Activated CD4-positive, alpha-beta T cell treated with anti-CD3 and anti-CD28 coated beads for 36 hours (primary cell): ENCODE measurements at regions of chr17 and their contacts with region 1.

Region 1: GRCh38 chr17:79796763-79797491 is at the start of gene CBX8:
- DNase-seq: peak; percentile 100
- ATAC-seq: peak; percentile 88
- H3K4me3 Mint-ChIP-seq: peak within 1 kb of the TSS; percentile 79
- H3K27ac Mint-ChIP-seq: peak within 1 kb of the TSS; percentile 55
- H3K4me1 Mint-ChIP-seq: peaks cover 33% of the 10 kb centered on the region
- H3K27me3 Mint-ChIP-seq: peaks cover 35% of the 10 kb centered on the region
- total RNA-seq, gene CBX8: 4.7 to 6.0 TPM

Region 2: DNA sequence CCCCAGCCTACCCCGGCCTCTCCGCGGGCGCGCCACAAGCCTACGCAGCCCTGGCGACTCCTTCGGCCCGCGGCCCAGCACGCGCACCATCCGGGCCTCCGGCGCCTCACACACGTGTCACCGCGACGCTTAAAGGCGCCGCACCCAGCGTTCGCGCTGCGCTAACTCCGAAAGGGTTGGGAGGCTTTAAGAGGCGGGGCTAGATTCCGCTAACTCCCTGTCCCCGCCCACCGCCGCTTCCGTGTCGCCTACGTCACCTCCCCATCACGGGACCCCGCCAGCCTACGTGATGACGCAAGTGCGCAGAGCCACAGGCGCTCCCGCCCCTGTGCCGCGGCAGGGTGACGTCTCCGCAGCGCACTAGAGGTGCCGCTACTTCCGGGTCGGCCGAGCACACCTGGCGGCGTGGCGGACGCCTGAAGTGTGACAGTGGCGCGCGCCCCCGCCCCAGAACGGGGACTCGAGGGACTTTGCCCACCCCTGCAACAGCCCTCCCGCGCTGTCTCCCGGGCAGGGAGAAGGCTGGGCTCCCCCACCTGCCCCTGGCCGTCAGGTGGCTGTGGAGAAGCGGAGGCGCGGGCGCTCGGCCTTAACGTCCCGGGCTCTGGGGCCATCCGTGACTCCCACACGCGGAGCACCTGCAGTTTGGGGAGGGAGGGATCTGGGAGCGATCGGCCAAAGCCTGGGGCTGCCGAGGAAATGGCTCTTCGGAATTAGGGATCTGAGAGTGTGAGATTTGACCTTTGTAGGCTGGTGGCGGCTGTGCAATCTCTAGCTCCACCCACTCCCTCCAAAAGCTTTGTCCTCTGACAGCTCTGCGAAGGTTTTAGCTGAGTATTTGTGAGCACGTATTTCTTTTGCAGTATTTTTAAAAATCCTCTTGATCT is 956.0 kb before region 1 on chr17 and contains the start of gene USP36:
- CTCF ChIA-PET with region 1: no interaction called
- POLR2A ChIA-PET with region 1: no interaction called
- intact Hi-C with region 1: loop called in 1 of 2 experiments (anchors 1 kb)
- DNase-seq: peak; percentile 100
- ATAC-seq: peak; percentile 89
- H3K4me3 Mint-ChIP-seq: peak within 1 kb of the TSS; percentile 86
- H3K27ac Mint-ChIP-seq: peak within 1 kb of the TSS; percentile 96
- H3K4me1 Mint-ChIP-seq: peaks cover 44% of the 10 kb centered on the region
- H3K27me3 Mint-ChIP-seq: no peaks in the 10 kb centered on the region
- total RNA-seq, gene USP36: 90.1 to 92.5 TPM

Region 3: DNA sequence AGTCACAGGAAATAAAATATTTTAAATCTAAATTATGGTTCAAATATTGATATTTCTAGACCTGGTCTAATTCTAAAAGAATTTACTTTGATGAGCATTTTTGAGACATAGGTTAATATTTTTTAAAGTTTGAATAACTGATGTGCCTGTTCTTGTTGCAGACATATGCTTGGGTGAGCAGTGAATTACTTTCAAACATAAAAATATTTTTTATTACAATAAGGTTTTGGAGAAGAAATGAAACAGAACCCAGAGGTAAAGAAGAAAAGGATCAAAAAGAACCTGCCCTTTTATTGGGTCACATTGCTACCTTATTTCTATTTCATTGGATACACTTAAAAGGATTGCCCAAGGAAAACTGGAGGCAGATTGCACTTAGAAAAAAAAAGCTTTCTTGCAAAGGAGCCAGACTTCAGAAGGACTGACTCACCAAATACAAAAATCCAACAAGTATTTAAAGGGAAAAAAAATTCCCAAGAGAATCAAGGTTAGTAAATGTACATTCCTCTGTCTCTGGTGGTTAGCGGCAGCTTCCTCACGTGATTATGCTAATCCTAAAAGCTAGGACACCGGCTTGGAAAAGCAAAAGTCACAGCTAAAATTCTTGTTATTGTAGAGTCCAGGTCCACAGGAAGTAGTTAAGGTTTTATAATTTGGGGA is 47.6 kb before region 1 on chr17:
- CTCF ChIA-PET with region 1: interaction called, 4 read pairs
- POLR2A ChIA-PET with region 1: no interaction called
- intact Hi-C with region 1: loop called in 1 of 2 experiments (anchors 2 kb)
- DNase-seq: no peak
- ATAC-seq: no peak
- H3K4me3 Mint-ChIP-seq: no peak overlapping the region
- H3K27ac Mint-ChIP-seq: no peak overlapping the region
- H3K4me1 Mint-ChIP-seq: peaks cover 25% of the 10 kb centered on the region
- H3K27me3 Mint-ChIP-seq: peaks cover 39% of the 10 kb centered on the region

Region 4: GRCh38 chr17:79769596-79770520 is 27.1 kb before region 1 on chr17:
- CTCF ChIA-PET with region 1: no interaction called
- POLR2A ChIA-PET with region 1: no interaction called
- intact Hi-C with region 1: no loop called
- DNase-seq: no peak
- ATAC-seq: no peak
- H3K4me3 Mint-ChIP-seq: no peak overlapping the region
- H3K27ac Mint-ChIP-seq: no peak overlapping the region
- H3K4me1 Mint-ChIP-seq: no peaks in the 10 kb centered on the region
- H3K27me3 Mint-ChIP-seq: peaks cover 23% of the 10 kb centered on the region

Region 5: DNA sequence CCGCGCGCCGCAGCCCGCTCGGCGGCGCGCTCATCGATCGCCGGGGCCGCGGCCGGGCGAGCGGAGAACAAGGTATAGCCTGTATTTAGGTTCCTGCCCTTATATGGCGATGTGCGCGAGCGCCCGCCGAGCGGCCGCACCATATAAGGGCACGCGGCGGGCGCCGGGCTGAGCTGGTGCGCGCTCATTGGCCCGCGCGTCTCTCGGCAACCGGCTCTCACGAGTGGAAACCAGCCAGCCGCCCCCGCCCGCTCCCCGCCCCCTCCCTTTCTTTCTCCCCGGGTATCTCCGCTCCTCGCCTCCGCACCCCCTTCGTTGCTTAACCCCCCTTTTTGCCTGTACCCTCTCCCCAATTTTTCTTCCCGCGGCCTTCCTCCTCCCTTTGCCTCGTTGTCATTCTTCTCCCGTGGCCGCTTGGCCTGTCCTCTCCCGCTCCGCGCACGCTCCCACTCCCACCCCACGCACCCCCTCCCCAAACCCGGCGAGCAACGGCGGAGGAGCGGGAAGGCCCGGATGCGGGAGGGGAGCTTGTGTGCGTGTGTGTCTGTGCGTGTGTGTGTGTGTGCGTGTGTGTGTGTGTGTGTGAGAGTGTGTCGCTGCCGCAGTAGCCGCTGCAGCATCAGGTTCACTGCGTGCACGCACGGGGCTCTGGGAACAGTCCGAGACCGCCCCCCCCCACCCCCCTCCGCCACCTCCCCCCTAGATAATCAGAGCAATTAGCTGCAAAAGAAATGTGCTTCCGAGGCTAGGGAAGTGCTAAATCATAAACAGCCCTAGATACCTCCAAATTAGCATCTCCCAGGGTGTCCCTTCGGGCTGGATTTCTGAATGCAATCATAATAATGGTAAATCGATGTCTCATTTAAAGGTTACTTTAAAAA is 13.4 kb after region 1 on chr17:
- CTCF ChIA-PET with region 1: interaction called, 5 read pairs
- POLR2A ChIA-PET with region 1: interaction called, 3 read pairs
- intact Hi-C with region 1: loop called (anchors 1 to 2 kb)
- DNase-seq: peak; percentile 90
- ATAC-seq: peak; percentile 90
- H3K4me3 Mint-ChIP-seq: peak overlapping the region; percentile 18
- H3K27ac Mint-ChIP-seq: no peak overlapping the region
- H3K4me1 Mint-ChIP-seq: peaks cover 39% of the 10 kb centered on the region
- H3K27me3 Mint-ChIP-seq: peaks cover 59% of the 10 kb centered on the region

Region 6: DNA sequence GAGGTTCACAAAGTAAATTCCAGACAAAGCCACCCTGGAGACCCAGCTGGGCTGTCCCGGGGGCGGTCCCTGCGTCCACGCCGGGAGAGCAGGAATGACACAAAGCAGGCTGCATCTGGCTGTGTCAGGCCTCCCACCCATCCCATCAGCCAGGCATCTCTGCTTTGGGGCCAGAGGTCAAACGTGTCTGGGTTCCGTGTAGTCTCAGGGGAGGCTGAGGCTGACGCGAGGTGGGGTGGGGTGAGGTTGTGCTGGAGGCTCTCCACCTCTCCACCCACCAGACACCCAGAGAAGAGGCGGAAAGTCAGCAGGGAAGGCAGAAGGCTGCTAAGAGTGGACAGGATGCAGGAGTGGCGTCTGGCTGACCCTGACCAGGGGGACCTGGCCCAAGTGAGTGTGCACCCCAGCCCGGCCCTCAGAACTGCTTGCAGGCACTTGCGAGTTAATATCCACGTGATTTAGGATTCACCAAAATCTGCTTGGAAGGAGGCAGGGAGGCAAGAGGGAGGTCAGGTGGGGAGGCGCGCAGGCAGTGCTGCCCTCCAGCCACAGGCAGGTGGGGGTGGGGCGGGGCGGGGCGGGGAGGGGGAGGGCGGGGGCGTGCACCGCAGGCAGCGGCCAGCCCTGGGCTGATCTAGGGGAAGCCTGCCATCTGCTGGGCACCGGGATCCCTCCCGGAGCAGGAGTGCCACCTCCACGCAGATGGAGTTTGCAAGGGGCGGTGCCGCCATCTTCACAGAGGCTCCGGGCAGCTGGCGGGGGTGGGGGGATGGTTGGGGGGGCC is 194.4 kb after region 1 on chr17:
- CTCF ChIA-PET with region 1: no interaction called
- POLR2A ChIA-PET with region 1: no interaction called
- intact Hi-C with region 1: loop called in 1 of 2 experiments (anchors 1 kb)
- DNase-seq: peak; percentile 93
- ATAC-seq: peak; percentile 77
- H3K4me3 Mint-ChIP-seq: peak overlapping the region; percentile 75
- H3K27ac Mint-ChIP-seq: peak overlapping the region; percentile 14
- H3K4me1 Mint-ChIP-seq: peaks cover 41% of the 10 kb centered on the region
- H3K27me3 Mint-ChIP-seq: no peaks in the 10 kb centered on the region

Region 7: DNA sequence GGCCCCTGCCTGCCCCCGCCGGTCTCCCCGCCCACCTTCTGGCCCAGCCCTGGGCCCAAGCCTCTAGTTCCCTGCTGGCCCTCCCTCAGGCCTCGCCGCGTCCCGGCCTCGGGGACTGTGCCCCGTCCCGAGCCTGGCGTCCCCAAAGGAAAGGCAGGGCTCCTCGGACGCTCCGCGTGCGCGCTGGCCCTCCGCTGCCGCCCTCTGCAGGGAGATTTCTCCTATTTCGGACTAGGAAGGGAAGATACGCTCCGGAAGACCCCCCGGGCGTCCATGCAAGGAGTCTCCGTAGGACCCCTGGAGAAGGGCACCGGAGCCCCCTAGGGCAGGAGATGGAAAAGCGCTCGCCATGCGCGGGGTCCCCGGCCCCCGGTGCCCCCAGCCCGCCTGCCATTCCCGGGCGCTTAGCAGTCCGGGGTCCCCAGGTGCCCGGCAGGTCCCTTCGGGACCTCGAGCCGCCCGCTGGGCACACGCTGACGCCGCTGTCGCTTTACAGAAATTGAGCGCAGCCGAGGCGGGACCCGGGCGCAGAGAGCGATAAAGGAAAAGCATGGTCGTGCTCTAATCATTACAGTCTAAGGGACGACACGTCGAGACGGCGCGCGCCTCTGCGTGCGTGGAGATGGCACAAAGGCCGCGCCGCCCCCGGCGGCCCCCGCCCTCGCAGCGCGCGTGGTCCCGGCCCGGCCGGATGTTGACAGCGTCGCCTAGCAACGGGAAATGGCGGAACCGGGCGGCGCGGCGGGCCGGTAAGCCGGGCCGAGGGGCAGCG is 239.2 kb after region 1 on chr17 and contains the start of gene CCDC40:
- CTCF ChIA-PET with region 1: no interaction called
- POLR2A ChIA-PET with region 1: no interaction called
- intact Hi-C with region 1: loop called in 1 of 2 experiments (anchors 1 kb)
- DNase-seq: peak; percentile 82
- ATAC-seq: peak; percentile 72
- H3K4me3 Mint-ChIP-seq: peak within 1 kb of the TSS; percentile 82
- H3K27ac Mint-ChIP-seq: no peak within 1 kb of the TSS
- H3K4me1 Mint-ChIP-seq: peaks cover 7% of the 10 kb centered on the region
- H3K27me3 Mint-ChIP-seq: peaks cover 12% of the 10 kb centered on the region
- total RNA-seq, gene CCDC40: 0.56 to 0.57 TPM

Region 8: DNA sequence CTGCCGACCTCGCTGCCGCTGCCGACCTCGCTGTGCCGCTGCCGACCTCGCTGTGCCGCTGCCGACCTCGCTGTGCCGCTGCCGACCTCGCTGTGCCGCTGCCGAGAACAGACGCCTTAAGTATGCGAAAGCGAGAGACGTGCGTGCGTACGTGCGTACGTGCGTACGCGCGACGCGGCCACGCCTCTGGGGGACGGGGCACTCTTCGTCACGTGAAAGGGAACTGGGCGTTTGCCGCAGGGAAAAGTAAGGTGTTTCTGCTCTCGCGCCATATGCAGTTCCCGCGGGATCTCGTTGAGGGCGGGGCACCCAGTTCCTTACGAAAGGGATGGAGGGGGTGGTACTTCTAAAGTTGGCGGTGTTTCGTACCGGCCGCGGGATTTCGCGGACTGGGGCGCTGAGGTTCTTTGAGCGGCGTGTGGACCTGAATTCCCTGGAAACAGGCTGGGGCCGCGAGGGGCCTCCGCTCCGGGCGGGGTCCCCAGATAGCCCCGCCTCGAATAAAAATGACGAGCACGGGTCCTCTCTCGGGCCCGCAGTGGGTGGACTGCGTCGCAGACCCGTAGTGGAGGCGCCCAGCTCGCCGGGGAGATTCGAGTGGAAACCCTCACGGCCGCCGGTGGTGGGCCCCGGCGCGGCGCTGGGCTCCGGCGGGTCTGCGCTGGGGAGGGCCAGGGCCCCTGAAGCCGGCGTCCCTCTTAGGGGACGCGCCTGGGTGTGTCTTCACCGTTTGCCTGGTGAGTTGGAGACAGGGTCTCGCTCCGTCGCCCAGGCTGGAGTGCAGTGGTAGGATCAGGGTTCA is 350.3 kb after region 1 on chr17 and contains the start of gene EIF4A3:
- CTCF ChIA-PET with region 1: no interaction called
- POLR2A ChIA-PET with region 1: no interaction called
- intact Hi-C with region 1: loop called in 1 of 2 experiments (anchors 1 kb)
- DNase-seq: peak; percentile 99
- ATAC-seq: peak; percentile 91
- H3K4me3 Mint-ChIP-seq: peak within 1 kb of the TSS; percentile 77
- H3K27ac Mint-ChIP-seq: peak within 1 kb of the TSS; percentile 93
- H3K4me1 Mint-ChIP-seq: peaks cover 43% of the 10 kb centered on the region
- H3K27me3 Mint-ChIP-seq: no peaks in the 10 kb centered on the region
- total RNA-seq, gene EIF4A3: 103 to 141 TPM

Region 9: DNA sequence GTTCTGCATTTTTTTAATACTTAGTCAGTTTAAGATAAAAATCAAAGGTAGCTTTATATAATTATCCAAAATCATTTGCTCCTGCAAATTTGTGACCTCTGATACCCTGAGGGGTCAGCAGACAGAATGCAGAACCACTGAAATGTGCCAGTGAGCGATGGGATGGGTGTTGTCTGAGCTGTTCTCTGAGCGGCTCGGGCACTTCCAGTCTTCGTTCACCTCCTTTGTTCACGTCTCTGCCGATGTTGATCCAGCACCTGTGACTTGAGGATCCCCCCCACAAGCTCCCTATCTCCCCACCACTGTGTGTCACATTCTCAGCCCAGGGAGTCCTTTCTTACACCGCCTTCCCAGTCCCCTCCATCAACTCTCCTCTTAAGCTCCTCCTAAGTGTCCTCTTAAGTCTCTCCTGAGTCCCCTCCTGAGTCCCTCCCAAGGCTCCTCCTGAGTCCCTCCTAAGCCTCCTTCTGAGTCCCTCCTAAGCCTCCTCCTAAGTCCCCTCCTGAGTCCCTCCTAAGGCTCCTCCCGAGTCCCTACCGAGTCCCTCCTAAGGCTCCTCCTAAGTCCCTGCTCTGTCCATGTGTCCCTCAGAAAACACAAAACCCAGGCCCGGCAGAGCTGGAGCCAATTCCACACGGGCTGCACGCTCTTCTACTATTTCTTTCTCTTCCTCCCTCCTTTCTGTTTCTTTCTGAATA is 511.2 kb after region 1 on chr17:
- CTCF ChIA-PET with region 1: no interaction called
- POLR2A ChIA-PET with region 1: no interaction called
- intact Hi-C with region 1: no loop called
- DNase-seq: no peak
- ATAC-seq: no peak
- H3K4me3 Mint-ChIP-seq: no peak overlapping the region
- H3K27ac Mint-ChIP-seq: peak overlapping the region; percentile 84
- H3K4me1 Mint-ChIP-seq: peaks cover 12% of the 10 kb centered on the region
- H3K27me3 Mint-ChIP-seq: no peaks in the 10 kb centered on the region